Ascending aorta (tissue), 2 donors: ENCODE measurements at regions of chr11 and their contacts with region 1.

Region 1: GRCh38 chr11:44766112-44766971 is 39.6 kb downstream of the TSPAN18 start:
- DNase-seq: peak; percentile 25 to 85
- H3K4me3 ChIP-seq: no peak overlapping the region
- H3K27ac ChIP-seq: peak overlapping the region; percentile 90 to 91
- H3K4me1 ChIP-seq: peaks cover 9 to 36% of the 10 kb centered on the region in 2 donors
- H3K27me3 ChIP-seq: no peaks in the 10 kb centered on the region
- CTCF ChIP-seq: no peak

Region 2: GRCh38 chr11:44804449-44805437 is 38.4 kb after region 1 on chr11:
- intact Hi-C with region 1: loop called (anchors 5 kb)
- DNase-seq: no peak
- H3K4me3 ChIP-seq: peak overlapping the region in 1 of 2 donors; percentile 35
- H3K27ac ChIP-seq: peak overlapping the region in 1 of 2 donors; percentile 4
- H3K4me1 ChIP-seq: peaks cover 0 to 11% of the 10 kb centered on the region in 2 donors
- H3K27me3 ChIP-seq: no peaks in the 10 kb centered on the region
- CTCF ChIP-seq: no peak